MCF 10A (cell line): ENCODE measurements at regions of chr6 and their contacts with region 1.

Region 1: DNA sequence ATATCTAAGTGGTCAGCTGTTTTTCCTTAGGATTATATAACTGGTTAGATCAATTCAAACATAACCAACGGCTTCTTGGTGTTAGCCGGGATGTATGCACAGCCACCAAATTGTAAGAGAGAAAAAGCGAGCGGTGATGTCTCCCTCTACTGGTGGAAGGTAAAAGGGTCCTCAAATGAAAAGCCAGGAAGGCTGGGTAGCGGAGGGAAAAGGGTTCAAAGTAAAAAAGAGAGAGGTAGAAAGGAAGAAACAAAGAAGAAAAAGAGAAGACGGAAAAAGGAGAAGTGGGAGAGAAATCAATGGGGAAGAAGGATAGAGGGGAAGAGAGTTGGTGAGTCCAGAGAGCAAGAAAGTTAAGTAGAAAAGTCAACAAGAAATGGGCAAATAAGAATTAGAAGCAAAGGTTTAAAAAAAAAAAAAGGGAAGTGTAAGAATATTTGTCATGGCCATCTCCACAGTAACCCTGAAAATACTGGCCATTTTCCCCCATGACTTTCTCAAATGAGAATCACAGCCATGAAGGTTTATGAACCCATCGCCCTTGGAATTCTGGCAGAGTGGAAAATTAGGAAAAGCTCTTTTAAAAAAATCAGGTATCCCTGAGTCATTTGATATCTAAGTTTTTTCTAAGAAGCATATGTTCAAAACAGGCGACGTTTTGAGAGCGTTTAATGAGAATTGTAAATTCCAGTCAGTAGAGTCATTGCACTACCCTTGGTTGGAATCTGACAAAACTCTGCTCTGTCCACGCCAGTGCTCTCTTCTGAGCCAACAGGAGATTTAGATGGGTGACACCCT is 155.6 kb upstream of the SNX9 start:
- DNase-seq: peak; percentile 80
- H3K4me3 Mint-ChIP-seq: peak overlapping the region; percentile 1
- H3K27ac Mint-ChIP-seq: peak overlapping the region; percentile 78
- H3K4me1 Mint-ChIP-seq: peaks cover 22% of the 10 kb centered on the region
- H3K27me3 Mint-ChIP-seq: no peaks in the 10 kb centered on the region
- CTCF ChIP-seq: peak; percentile 78

Region 2: GRCh38 chr6:157323255-157323965 is 344.0 kb before region 1 on chr6 and contains the start of gene TMEM242:
- CTCF ChIA-PET with region 1: interaction called, 8 read pairs
- POLR2A ChIA-PET with region 1: interaction called, 13 read pairs
- intact Hi-C with region 1: no loop called
- DNase-seq: peak; percentile 93
- H3K4me3 Mint-ChIP-seq: peak within 1 kb of the TSS; percentile 81
- H3K27ac Mint-ChIP-seq: peak within 1 kb of the TSS; percentile 87
- H3K4me1 Mint-ChIP-seq: no peaks in the 10 kb centered on the region
- H3K27me3 Mint-ChIP-seq: no peaks in the 10 kb centered on the region
- CTCF ChIP-seq: no peak
- total RNA-seq, gene TMEM242: 9.4 and 10.1 TPM in 2 replicates

Region 3: DNA sequence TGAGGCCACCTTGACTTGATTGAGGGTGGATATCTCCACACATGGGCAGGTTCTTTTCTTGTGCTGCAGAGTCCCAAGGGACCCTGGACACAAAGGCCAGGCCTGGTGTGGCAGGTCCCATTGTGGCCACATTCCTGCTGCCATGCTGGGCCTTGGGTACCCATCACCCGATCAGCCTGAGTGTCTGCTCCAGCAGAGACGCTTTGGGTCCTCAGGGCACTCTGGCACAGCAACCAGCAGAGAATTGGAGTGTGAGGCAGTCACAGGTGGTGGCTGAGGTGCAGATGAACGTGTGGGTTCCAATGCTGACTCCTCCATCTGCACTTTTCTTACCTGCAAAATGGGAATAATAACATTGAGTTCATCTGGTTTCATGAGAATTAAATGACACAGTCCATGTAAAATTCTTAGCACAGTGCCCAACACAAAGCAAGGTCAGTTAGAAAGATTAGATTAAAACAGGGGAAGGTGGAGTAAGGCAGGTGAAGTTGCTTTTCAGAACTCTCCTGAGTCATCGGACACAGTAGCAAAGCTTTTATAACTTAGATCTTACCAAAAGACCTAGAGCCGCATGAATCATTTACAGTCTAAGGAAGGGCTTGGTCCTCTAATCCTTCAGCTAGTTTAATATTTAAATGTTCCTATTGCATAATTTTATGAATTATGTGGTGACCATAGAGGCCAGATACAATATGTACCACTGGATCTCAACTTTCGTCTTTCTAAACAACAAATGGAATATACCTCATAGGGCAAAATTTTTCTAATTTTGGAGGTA is 46.7 kb before region 1 on chr6:
- CTCF ChIA-PET with region 1: interaction called, 17 read pairs
- POLR2A ChIA-PET with region 1: interaction called, 3 read pairs
- intact Hi-C with region 1: no loop called
- DNase-seq: peak; percentile 43
- H3K4me3 Mint-ChIP-seq: no peak overlapping the region
- H3K27ac Mint-ChIP-seq: no peak overlapping the region
- H3K4me1 Mint-ChIP-seq: peaks cover 11% of the 10 kb centered on the region
- H3K27me3 Mint-ChIP-seq: no peaks in the 10 kb centered on the region
- CTCF ChIP-seq: no peak

Region 4: GRCh38 chr6:157682931-157683403 is 15.6 kb after region 1 on chr6:
- CTCF ChIA-PET with region 1: interaction called, 34 read pairs
- POLR2A ChIA-PET with region 1: interaction called, 4 read pairs
- intact Hi-C with region 1: no loop called
- DNase-seq: peak; percentile 64
- H3K4me3 Mint-ChIP-seq: no peak overlapping the region
- H3K27ac Mint-ChIP-seq: peak overlapping the region; percentile 58
- H3K4me1 Mint-ChIP-seq: no peaks in the 10 kb centered on the region
- H3K27me3 Mint-ChIP-seq: no peaks in the 10 kb centered on the region
- CTCF ChIP-seq: no peak

Region 5: GRCh38 chr6:157873735-157874344 is 206.4 kb after region 1 on chr6:
- CTCF ChIA-PET with region 1: interaction called, 10 read pairs
- POLR2A ChIA-PET with region 1: no interaction called
- intact Hi-C with region 1: loop called (anchors 5 kb)
- DNase-seq: peak; percentile 80
- H3K4me3 Mint-ChIP-seq: no peak overlapping the region
- H3K27ac Mint-ChIP-seq: no peak overlapping the region
- H3K4me1 Mint-ChIP-seq: no peaks in the 10 kb centered on the region
- H3K27me3 Mint-ChIP-seq: no peaks in the 10 kb centered on the region
- CTCF ChIP-seq: peak; percentile 75